Activated CD4-positive, alpha-beta T cell treated with anti-CD3 and anti-CD28 coated beads, Interleukin-2, amount 10 ng/mL, durations not matched to agents 7 days and 5 days (primary cell): ENCODE measurements at regions of chr3 and their contacts with region 1.

Region 1: DNA sequence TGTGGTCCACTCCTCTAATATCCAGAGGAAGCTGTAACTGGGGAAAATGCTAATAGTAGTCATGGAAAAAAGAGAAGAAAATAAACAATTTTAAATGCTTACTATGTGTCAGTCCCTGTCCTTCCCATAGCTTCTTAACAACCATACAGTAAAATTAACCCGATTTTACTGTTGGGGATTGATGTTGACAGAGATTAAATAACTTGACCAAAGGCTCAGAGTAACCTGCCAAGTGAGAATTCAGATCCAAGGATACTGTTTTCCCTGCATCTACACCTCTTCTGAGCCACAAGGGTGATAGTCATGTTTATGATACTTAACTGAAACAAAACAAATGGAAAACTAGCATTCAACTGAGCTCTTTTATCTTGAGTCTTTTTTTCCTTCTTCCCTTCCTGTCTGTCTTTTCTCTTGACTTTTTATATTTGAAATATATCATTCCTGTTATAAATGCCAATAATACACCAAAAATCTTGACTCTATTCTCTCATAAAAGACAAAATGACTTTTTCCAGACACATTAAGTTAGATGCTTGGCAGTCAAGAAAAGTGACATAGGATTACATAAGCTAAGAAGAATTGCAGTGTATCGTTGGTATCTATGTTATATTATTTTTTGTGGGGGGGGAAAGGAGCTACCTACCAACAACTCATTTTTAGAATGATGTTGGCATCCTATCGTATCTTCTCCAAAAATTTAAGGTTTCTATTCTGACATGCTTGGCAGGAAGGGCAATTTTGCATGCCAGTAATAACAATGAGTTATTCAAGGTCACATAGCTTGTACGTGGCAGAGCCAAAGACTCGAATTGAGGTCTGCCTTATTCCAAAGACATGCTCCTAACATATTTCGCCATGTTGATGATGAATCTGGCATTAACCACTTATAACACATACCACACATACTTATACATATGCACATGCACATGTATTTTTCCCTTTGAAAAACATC is 306.6 kb upstream of the KCNH8 start:
- DNase-seq: no peak
- H3K4me3 Mint-ChIP-seq: no peak overlapping the region
- H3K27ac Mint-ChIP-seq: no peak overlapping the region
- H3K4me1 Mint-ChIP-seq: peaks cover 45% of the 10 kb centered on the region
- H3K27me3 Mint-ChIP-seq: no peaks in the 10 kb centered on the region

Region 2: GRCh38 chr3:18830087-18830486 is 11.6 kb before region 1 on chr3:
- CTCF ChIA-PET with region 1: interaction called, 12 read pairs
- POLR2A ChIA-PET with region 1: no interaction called
- DNase-seq: peak; percentile 37
- H3K4me3 Mint-ChIP-seq: no peak overlapping the region
- H3K27ac Mint-ChIP-seq: no peak overlapping the region
- H3K4me1 Mint-ChIP-seq: peaks cover 14% of the 10 kb centered on the region
- H3K27me3 Mint-ChIP-seq: no peaks in the 10 kb centered on the region

Region 3: DNA sequence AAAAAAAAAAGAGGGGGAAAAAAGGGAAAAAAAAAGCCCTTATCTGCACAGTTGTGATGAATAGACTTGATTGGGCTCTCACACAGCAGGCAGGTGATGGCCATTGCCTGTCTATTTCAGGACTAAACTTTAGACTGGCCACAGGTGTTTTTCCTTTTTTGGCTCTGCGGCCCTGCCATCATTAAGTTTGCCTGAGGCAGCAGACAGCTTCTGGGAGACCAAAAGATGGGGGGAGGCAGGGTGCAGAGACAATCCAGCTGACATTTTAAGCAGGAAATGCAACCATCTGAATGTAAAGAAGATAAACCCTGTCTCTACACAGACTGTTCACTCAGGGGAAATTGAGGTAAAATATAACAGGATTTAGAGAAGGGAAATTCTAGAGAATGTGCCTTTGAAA is 11.6 kb after region 1 on chr3:
- CTCF ChIA-PET with region 1: no interaction called
- POLR2A ChIA-PET with region 1: no interaction called
- DNase-seq: no peak
- H3K4me3 Mint-ChIP-seq: no peak overlapping the region
- H3K27ac Mint-ChIP-seq: no peak overlapping the region
- H3K4me1 Mint-ChIP-seq: peaks cover 3% of the 10 kb centered on the region
- H3K27me3 Mint-ChIP-seq: peaks cover 1% of the 10 kb centered on the region

Region 4: DNA sequence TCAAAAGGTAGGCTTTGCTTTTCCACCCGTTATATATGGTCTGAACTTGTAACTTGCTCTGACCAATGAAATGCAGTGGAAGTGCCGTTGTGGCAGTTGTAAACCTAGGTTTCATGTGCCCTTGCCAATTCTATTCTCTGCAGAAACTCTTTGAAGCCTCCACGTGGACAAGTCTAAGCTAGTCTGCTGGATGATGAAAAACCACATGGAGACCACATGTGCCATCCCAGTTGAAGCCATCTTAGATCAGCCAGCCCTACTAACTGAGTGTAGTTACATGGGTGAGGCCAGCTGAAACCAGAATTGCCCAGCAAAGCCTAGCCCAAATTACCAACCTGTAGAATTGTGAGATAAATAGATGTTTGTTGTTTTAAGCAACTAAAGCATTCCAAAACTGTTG is 123.0 kb after region 1 on chr3:
- CTCF ChIA-PET with region 1: no interaction called
- POLR2A ChIA-PET with region 1: no interaction called
- DNase-seq: no peak
- H3K4me3 Mint-ChIP-seq: no peak overlapping the region
- H3K27ac Mint-ChIP-seq: no peak overlapping the region
- H3K4me1 Mint-ChIP-seq: no peaks in the 10 kb centered on the region
- H3K27me3 Mint-ChIP-seq: no peaks in the 10 kb centered on the region

Region 5: GRCh38 chr3:18988614-18989229 is 147.1 kb after region 1 on chr3:
- CTCF ChIA-PET with region 1: interaction called, 10 read pairs
- POLR2A ChIA-PET with region 1: no interaction called
- DNase-seq: peak; percentile 46
- H3K4me3 Mint-ChIP-seq: peak overlapping the region; percentile 70
- H3K27ac Mint-ChIP-seq: peak overlapping the region; percentile 80
- H3K4me1 Mint-ChIP-seq: peaks cover 36% of the 10 kb centered on the region
- H3K27me3 Mint-ChIP-seq: peaks cover 7% of the 10 kb centered on the region